ENCODE measurements at regions of chr10 and their contacts with region 1.

Region 1: GRCh38 chr10:86399879-86400704 is 33.5 kb upstream of the GRID1 start:
- DNase-seq: peak; percentile 89 to 92 (median 90)
- H3K4me3 ChIP-seq: peak overlapping the region; percentile 64 to 73
- H3K4me3 Mint-ChIP-seq: peak overlapping the region; percentile 87 to 93 (median 90)
- H3K27ac ChIP-seq: peak overlapping the region; percentile 73
- H3K27ac Mint-ChIP-seq: peak overlapping the region; percentile 89 to 97 (median 92)
- H3K4me1 ChIP-seq: peaks cover 13% of the 10 kb centered on the region
- H3K4me1 Mint-ChIP-seq: peaks cover 4 to 12% (median 7%) of the 10 kb centered on the region in 4 donors
- H3K27me3 ChIP-seq: no peaks in the 10 kb centered on the region
- H3K27me3 Mint-ChIP-seq: no peaks in the 10 kb centered on the region

Region 2: GRCh38 chr10:86419101-86419500 is 19.0 kb after region 1 on chr10:
- CTCF ChIA-PET with region 1: interaction called, 30 read pairs
- POLR2A ChIA-PET with region 1: interaction called, 134 read pairs
- intact Hi-C with region 1: no loop called
- DNase-seq: no peak
- H3K4me3 ChIP-seq: no peak overlapping the region
- H3K4me3 Mint-ChIP-seq: no peak overlapping the region
- H3K27ac ChIP-seq: no peak overlapping the region
- H3K27ac Mint-ChIP-seq: peak overlapping the region in 1 of 7 donors; percentile 3
- H3K4me1 ChIP-seq: peaks cover 12% of the 10 kb centered on the region
- H3K4me1 Mint-ChIP-seq: peaks cover 8 to 24% (median 15%) of the 10 kb centered on the region in 4 donors
- H3K27me3 ChIP-seq: no peaks in the 10 kb centered on the region
- H3K27me3 Mint-ChIP-seq: peaks cover 0 to 1% of the 10 kb centered on the region in 2 donors

Region 3: DNA sequence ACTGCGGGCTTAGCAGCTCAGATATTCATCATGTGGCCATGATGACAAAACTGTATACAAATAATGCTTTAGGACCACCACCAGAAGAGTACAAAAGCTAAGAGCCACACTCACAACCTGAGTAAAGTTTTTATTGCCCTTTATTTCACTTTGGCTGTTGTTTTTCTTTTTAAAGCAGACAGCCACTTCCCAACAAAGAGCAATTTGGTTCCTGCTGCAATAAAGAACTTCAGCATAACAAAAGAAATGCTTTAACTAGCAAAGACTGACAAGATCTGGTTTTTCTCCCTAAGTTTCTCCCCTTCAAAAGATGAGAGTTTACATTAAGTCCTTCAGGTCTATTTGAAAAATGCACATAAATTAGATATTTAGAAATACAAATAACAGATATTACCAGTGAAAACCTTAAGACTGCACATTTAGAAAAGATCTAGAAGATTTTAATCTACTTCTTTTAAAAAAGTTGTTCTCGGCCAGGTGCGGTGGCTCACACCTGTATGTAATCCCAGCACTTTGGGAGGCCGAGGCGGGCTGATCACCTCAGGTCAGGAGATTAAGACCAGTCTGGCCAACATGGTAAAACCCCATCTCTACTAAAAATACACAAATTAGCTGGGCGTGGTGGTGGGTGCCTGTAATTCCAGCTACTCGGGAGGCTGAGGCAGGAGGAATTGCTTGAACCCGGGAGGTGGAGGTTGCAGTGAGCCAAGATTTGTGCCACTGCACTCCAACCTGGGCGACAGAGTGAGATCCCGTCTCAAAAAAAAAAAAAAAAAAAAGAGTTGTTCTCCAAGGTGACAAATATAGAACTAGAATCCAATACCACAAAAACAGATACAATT is 62.1 kb after region 1 on chr10:
- CTCF ChIA-PET with region 1: interaction called, 13 read pairs
- POLR2A ChIA-PET with region 1: interaction called, 5 read pairs
- intact Hi-C with region 1: no loop called
- DNase-seq: no peak
- H3K4me3 ChIP-seq: no peak overlapping the region
- H3K4me3 Mint-ChIP-seq: no peak overlapping the region
- H3K27ac ChIP-seq: no peak overlapping the region
- H3K27ac Mint-ChIP-seq: peak overlapping the region in 2 of 7 donors; percentile 30 to 73
- H3K4me1 ChIP-seq: no peaks in the 10 kb centered on the region
- H3K4me1 Mint-ChIP-seq: peaks cover 0 to 3% (median 1%) of the 10 kb centered on the region in 4 donors
- H3K27me3 ChIP-seq: no peaks in the 10 kb centered on the region
- H3K27me3 Mint-ChIP-seq: no peaks in the 10 kb centered on the region

Region 4: DNA sequence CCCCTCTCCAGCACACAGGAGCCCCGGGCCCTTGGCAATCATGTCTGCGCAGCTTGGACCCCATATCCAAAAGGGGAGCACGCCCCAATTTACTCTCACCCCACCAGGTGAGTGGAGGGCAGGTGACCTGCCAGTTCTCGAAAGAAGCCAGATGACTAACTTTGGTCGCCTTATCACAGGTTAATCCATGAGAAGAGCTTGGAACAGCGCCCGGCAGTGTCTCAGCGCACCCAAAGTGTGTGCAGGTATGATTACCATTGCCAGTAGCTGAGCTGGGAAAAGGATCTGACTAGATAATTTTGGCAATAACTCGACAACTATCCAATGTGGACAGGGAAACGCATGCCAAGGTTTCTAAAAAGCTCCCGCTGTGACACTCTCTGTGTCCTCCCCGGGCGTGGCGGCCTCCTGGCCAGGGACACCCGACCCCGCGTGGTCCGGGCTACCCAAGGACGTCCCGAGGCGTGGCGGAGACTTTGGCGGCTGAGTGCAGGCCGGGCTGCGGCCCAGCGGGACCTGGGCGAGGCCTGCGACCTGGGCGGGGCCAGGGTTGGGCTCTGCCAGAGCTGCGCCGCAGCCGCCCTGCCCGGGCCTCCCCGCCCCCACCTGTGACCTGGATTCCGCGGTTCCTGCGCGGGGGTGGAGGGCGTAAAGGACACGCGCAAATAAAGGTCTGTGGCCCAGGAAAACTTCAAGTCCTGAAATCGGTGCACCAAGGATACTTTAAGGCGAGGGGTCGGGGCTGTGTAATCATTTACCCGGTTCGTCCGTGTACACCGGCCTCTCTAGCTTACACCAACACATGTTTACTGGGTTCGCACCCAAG is 135.2 kb after region 1 on chr10:
- CTCF ChIA-PET with region 1: interaction called, 11 read pairs
- POLR2A ChIA-PET with region 1: interaction called, 11 read pairs
- intact Hi-C with region 1: no loop called
- DNase-seq: peak; percentile 12 to 40 (median 22)
- H3K4me3 ChIP-seq: no peak overlapping the region
- H3K4me3 Mint-ChIP-seq: peak overlapping the region; percentile 62 to 86 (median 81)
- H3K27ac ChIP-seq: peak overlapping the region; percentile 21
- H3K27ac Mint-ChIP-seq: peak overlapping the region; percentile 73 to 89 (median 81)
- H3K4me1 ChIP-seq: peaks cover 20% of the 10 kb centered on the region
- H3K4me1 Mint-ChIP-seq: peaks cover 19 to 33% (median 27%) of the 10 kb centered on the region in 4 donors
- H3K27me3 ChIP-seq: no peaks in the 10 kb centered on the region
- H3K27me3 Mint-ChIP-seq: no peaks in the 10 kb centered on the region

Region 5: DNA sequence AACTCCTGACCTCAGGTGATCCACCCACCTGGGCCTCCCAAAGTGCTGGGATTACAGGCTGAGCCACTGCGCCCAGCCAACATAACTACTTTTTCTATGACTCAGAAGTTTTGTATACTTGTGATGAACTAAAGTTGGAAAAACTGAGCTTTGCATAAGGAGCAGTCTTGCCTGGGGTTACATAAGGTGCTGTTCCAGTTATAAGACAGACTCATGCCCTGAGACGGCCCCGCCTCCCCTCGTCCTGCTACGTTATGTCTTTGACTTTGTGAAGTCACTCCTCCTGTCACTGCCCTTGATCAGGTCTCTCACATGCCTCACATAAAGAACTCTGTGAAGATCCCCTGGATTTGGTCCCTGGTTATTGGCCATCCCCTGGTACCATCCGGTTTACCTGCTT is 213.8 kb after region 1 on chr10:
- CTCF ChIA-PET with region 1: no interaction called
- POLR2A ChIA-PET with region 1: no interaction called
- intact Hi-C with region 1: no loop called
- DNase-seq: no peak
- H3K4me3 ChIP-seq: no peak overlapping the region
- H3K4me3 Mint-ChIP-seq: no peak overlapping the region
- H3K27ac ChIP-seq: no peak overlapping the region
- H3K27ac Mint-ChIP-seq: no peak overlapping the region
- H3K4me1 ChIP-seq: no peaks in the 10 kb centered on the region
- H3K4me1 Mint-ChIP-seq: no peaks in the 10 kb centered on the region
- H3K27me3 ChIP-seq: no peaks in the 10 kb centered on the region
- H3K27me3 Mint-ChIP-seq: peaks cover 7 to 9% of the 10 kb centered on the region in 2 donors

Region 6: GRCh38 chr10:86710987-86711512 is 311.0 kb after region 1 on chr10:
- CTCF ChIA-PET with region 1: no interaction called
- POLR2A ChIA-PET with region 1: interaction called, 4 read pairs
- intact Hi-C with region 1: loop called (anchors 1 kb)
- DNase-seq: peak; percentile 81 to 88 (median 87)
- H3K4me3 ChIP-seq: peak overlapping the region in 1 of 2 donors; percentile 64
- H3K4me3 Mint-ChIP-seq: peak overlapping the region; percentile 81 to 96 (median 92)
- H3K27ac ChIP-seq: peak overlapping the region; percentile 75
- H3K27ac Mint-ChIP-seq: peak overlapping the region; percentile 87 to 97 (median 96)
- H3K4me1 ChIP-seq: peaks cover 15% of the 10 kb centered on the region
- H3K4me1 Mint-ChIP-seq: peaks cover 7 to 21% (median 14%) of the 10 kb centered on the region in 4 donors
- H3K27me3 ChIP-seq: no peaks in the 10 kb centered on the region
- H3K27me3 Mint-ChIP-seq: no peaks in the 10 kb centered on the region

Region 7: GRCh38 chr10:86965986-86966654 is 566.0 kb after region 1 on chr10:
- CTCF ChIA-PET with region 1: no interaction called
- POLR2A ChIA-PET with region 1: interaction called, 8 read pairs
- intact Hi-C with region 1: loop called (anchors 2 kb)
- DNase-seq: no peak
- H3K4me3 ChIP-seq: peak overlapping the region in 1 of 2 donors; percentile 23
- H3K4me3 Mint-ChIP-seq: peak overlapping the region; percentile 56 to 86 (median 80)
- H3K27ac ChIP-seq: no peak overlapping the region
- H3K27ac Mint-ChIP-seq: peak overlapping the region; percentile 59 to 87 (median 86)
- H3K4me1 ChIP-seq: peaks cover 46% of the 10 kb centered on the region
- H3K4me1 Mint-ChIP-seq: peaks cover 20 to 52% (median 29%) of the 10 kb centered on the region in 4 donors
- H3K27me3 ChIP-seq: no peaks in the 10 kb centered on the region
- H3K27me3 Mint-ChIP-seq: no peaks in the 10 kb centered on the region